B cell (primary cell): ENCODE measurements at regions of chr1 and their contacts with region 1.

Region 1: GRCh38 chr1:175673371-175674150 is 69.8 kb downstream of the TNR start:
- DNase-seq: peak; percentile 63
- ATAC-seq: peak; percentile 86
- H3K4me3 ChIP-seq: peak overlapping the region in 2 of 5 experiments; percentile 4 to 22
- H3K4me3 Mint-ChIP-seq: peak overlapping the region; percentile 77
- H3K27ac ChIP-seq: peak overlapping the region; percentile 27 to 56
- H3K27ac Mint-ChIP-seq: peak overlapping the region; percentile 91
- H3K4me1 ChIP-seq: peaks cover 47 to 56% of the 10 kb centered on the region in 2 donors
- H3K4me1 Mint-ChIP-seq: peaks cover 58% of the 10 kb centered on the region
- H3K27me3 ChIP-seq: no peaks in the 10 kb centered on the region
- H3K27me3 Mint-ChIP-seq: no peaks in the 10 kb centered on the region
- CTCF ChIP-seq: no peak

Region 2: GRCh38 chr1:175600721-175601440 is 72.7 kb before region 1 on chr1:
- CTCF ChIA-PET with region 1: interaction called, 8 read pairs
- POLR2A ChIA-PET with region 1: interaction called, 5 read pairs
- intact Hi-C with region 1: loop called (anchors 5 kb)
- DNase-seq: peak; percentile 76
- ATAC-seq: peak; percentile 50
- H3K4me3 ChIP-seq: peak overlapping the region; percentile 22 to 61 (median 32)
- H3K4me3 Mint-ChIP-seq: peak overlapping the region; percentile 88
- H3K27ac ChIP-seq: peak overlapping the region; percentile 74 to 78
- H3K27ac Mint-ChIP-seq: peak overlapping the region; percentile 92
- H3K4me1 ChIP-seq: peaks cover 53 to 55% of the 10 kb centered on the region in 2 donors
- H3K4me1 Mint-ChIP-seq: peaks cover 59% of the 10 kb centered on the region
- H3K27me3 ChIP-seq: peaks cover 0 to 6% (median 0%) of the 10 kb centered on the region in 4 experiments
- H3K27me3 Mint-ChIP-seq: peaks cover 2% of the 10 kb centered on the region
- CTCF ChIP-seq: no peak